ENCODE measurements at regions of chr3 and their contacts with region 1.

Region 1: GRCh38 chr3:11477407-11477911 is 166.3 kb downstream of the VGLL4 start:
- DNase-seq: no peak
- ATAC-seq: peak; percentile 22 to 60 (median 53)
- H3K4me3 ChIP-seq: no peak overlapping the region
- H3K27ac ChIP-seq: peak overlapping the region in 8 of 12 donors; percentile 26 to 85 (median 66)
- H3K4me1 ChIP-seq: peaks cover 4 to 45% (median 37%) of the 10 kb centered on the region in 12 donors
- H3K27me3 ChIP-seq: no peaks in the 10 kb centered on the region
- CTCF ChIP-seq: no peak
- POLR2A ChIP-seq: no peak

Region 2: GRCh38 chr3:11045536-11045935 is 431.9 kb before region 1 on chr3:
- intact Hi-C with region 1: no loop called
- DNase-seq: no peak
- ATAC-seq: no peak
- H3K4me3 ChIP-seq: no peak overlapping the region
- H3K27ac ChIP-seq: no peak overlapping the region
- H3K4me1 ChIP-seq: no peaks in the 10 kb centered on the region
- H3K27me3 ChIP-seq: peaks cover 0 to 10% (median 0%) of the 10 kb centered on the region in 9 donors
- CTCF ChIP-seq: no peak
- POLR2A ChIP-seq: no peak

Region 3: DNA sequence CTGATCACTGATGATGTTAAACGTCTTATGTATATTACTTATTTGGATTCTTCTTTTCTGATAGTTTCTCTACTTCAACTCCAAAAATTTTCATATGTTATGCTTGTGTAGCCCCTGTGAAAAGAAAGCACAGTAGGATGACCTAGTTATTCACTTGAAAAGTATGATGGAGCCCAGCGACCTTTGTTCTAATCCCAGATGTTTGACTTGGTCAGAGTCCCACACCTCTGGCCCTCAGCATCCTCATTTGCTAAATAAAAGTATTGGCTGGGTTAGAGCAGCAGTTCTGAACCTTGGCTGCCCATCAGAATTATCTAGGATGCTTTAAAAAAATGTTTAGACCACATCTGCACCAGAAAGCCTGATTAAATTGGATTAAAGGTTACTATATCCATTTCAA is 31.6 kb before region 1 on chr3:
- intact Hi-C with region 1: no loop called
- DNase-seq: peak in 2 of 5 donors; percentile 22 to 37
- ATAC-seq: peak; percentile 43 to 87 (median 60)
- H3K4me3 ChIP-seq: no peak overlapping the region
- H3K27ac ChIP-seq: no peak overlapping the region
- H3K4me1 ChIP-seq: peaks cover 0 to 12% (median 0%) of the 10 kb centered on the region in 12 donors
- H3K27me3 ChIP-seq: no peaks in the 10 kb centered on the region
- CTCF ChIP-seq: no peak
- POLR2A ChIP-seq: no peak

Region 4: GRCh38 chr3:11548721-11549131 is 71.3 kb after region 1 on chr3:
- intact Hi-C with region 1: loop called in 1 of 10 experiments (anchors 10 kb)
- DNase-seq: peak in 4 of 5 donors; percentile 30 to 52 (median 46)
- ATAC-seq: peak in 3 of 4 donors; percentile 33 to 47 (median 46)
- H3K4me3 ChIP-seq: no peak overlapping the region
- H3K27ac ChIP-seq: peak overlapping the region in 6 of 12 donors; percentile 7 to 60 (median 20)
- H3K4me1 ChIP-seq: peaks cover 0 to 57% (median 33%) of the 10 kb centered on the region in 12 donors
- H3K27me3 ChIP-seq: no peaks in the 10 kb centered on the region
- CTCF ChIP-seq: no peak
- POLR2A ChIP-seq: no peak